ENCODE measurements at regions of chr15 and their contacts with region 1.

Region 1: GRCh38 chr15:70097337-70098169 is at the start of gene TLE3:
- DNase-seq: peak; percentile 99 to 100
- H3K4me3 ChIP-seq: peak within 1 kb of the TSS; percentile 86 to 93
- H3K27ac ChIP-seq: peak within 1 kb of the TSS; percentile 97
- H3K4me1 ChIP-seq: peaks cover 62% of the 10 kb centered on the region
- H3K27me3 ChIP-seq: no peaks in the 10 kb centered on the region
- CTCF ChIP-seq: peak in 1 of 3 experiments; percentile 31
- POLR2A ChIP-seq: peak; percentile 57 to 95
- total RNA-seq, gene TLE3: 64.6 TPM

Region 2: GRCh38 chr15:70047386-70048197 is 50.0 kb before region 1 on chr15:
- intact Hi-C with region 1: no loop called
- DNase-seq: no peak
- H3K4me3 ChIP-seq: no peak overlapping the region
- H3K27ac ChIP-seq: no peak overlapping the region
- H3K4me1 ChIP-seq: peaks cover 9% of the 10 kb centered on the region
- H3K27me3 ChIP-seq: no peaks in the 10 kb centered on the region
- CTCF ChIP-seq: no peak
- POLR2A ChIP-seq: no peak

Region 3: GRCh38 chr15:70062321-70062956 is 35.1 kb before region 1 on chr15:
- intact Hi-C with region 1: loop called (anchors 5 kb)
- DNase-seq: no peak
- H3K4me3 ChIP-seq: no peak overlapping the region
- H3K27ac ChIP-seq: no peak overlapping the region
- H3K4me1 ChIP-seq: peaks cover 36% of the 10 kb centered on the region
- H3K27me3 ChIP-seq: no peaks in the 10 kb centered on the region
- CTCF ChIP-seq: no peak
- POLR2A ChIP-seq: no peak

Region 4: GRCh38 chr15:70271422-70272088 is 174.0 kb after region 1 on chr15:
- intact Hi-C with region 1: loop called (anchors 2 kb)
- DNase-seq: peak in 1 of 2 donors; percentile 98
- H3K4me3 ChIP-seq: peak overlapping the region in 1 of 2 donors; percentile 10
- H3K27ac ChIP-seq: peak overlapping the region; percentile 76
- H3K4me1 ChIP-seq: peaks cover 39% of the 10 kb centered on the region
- H3K27me3 ChIP-seq: no peaks in the 10 kb centered on the region
- CTCF ChIP-seq: no peak
- POLR2A ChIP-seq: no peak

Region 5: DNA sequence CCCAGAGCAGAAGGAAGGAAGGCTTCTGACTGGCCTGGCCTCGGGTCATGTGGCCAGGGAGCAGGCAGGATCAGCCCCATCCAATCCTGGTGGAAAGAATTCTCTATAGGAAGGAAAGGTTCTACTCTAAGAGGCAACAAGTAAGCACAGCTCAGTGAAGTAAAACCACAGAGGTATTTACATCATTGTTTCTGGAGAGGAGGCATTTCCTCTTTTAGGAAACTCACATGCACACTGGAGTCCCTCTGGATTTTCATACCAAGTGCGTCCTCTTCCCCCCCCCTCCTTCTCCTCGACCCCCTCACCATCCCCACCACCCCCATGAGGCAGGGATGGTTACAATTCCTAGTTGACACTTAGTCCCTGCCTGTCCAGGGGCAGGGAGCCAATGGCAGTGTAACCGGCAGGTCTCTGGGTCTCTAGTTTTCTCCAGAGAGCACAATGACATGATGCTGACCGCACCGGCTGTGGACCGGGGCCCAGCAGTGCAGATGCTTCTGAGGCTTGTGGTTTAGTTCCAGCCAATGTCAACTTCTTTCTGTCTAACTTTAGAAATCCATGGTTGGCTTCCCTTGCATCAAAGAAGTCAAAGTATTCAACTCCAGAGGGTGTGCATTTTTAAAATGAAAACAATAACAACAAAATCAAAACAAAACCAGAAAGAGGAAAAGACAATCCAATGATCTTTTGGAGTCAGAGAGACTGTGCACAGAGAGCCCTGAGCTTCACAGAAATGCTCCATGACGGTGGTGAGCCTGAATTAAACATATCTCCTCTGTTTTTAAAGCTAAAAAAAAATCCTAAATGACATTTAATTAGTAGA is 230.5 kb after region 1 on chr15:
- intact Hi-C with region 1: loop called (anchors 10 kb)
- DNase-seq: peak in 1 of 2 donors; percentile 81
- H3K4me3 ChIP-seq: no peak overlapping the region
- H3K27ac ChIP-seq: peak overlapping the region; percentile 39
- H3K4me1 ChIP-seq: peaks cover 44% of the 10 kb centered on the region
- H3K27me3 ChIP-seq: no peaks in the 10 kb centered on the region
- CTCF ChIP-seq: no peak
- POLR2A ChIP-seq: no peak

Region 6: DNA sequence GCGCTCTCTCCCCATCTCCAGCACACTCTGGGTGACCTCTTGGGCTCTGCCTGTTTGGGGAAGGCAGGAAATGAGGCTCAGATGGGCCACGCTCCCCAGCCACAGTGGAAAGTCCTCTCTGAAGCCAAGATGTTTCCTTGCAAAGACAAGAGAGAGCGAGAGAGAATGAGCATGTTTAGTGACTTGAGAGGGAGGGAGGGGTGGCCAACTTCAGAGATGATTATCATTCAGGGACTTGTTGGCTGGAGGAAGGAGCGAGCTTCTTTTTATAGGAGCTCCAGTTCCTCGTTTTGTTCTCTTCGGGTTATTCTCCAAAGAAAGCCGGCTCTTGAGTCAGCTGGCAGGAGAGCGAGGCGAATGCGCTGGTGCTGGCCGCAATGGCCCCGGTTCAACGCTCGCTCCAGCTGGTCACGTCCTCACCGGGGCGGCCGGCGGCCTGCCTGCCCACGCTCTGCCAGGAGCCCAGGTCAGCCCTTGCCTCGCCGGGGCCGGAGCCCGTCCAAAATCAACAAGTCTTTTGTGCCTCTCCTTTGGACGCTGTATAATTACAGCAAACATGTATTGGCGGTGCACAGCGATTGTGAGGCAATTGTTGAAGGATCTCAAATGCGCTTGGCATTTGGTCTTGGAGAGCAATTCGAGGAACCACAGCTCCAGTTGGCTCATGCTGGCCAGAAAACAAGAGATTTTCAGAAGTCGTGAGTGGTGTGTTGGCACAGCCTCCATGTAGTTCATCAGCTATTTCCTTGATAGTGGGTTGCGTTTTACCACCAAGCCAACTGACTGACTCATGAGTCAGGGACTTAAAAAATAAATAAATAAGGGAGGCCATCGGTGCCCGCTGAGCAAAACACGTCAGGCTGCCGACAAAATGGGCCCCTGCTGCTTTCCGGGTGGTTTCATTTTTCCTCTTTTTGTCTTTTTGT is 377.2 kb after region 1 on chr15:
- intact Hi-C with region 1: loop called (anchors 10 kb)
- DNase-seq: peak in 1 of 2 donors; percentile 93
- H3K4me3 ChIP-seq: peak overlapping the region; percentile 10 to 38
- H3K27ac ChIP-seq: peak overlapping the region; percentile 51
- H3K4me1 ChIP-seq: peaks cover 30% of the 10 kb centered on the region
- H3K27me3 ChIP-seq: no peaks in the 10 kb centered on the region
- CTCF ChIP-seq: no peak
- POLR2A ChIP-seq: no peak